ENCODE measurements at regions of chr9 and their contacts with region 1.

Region 1: DNA sequence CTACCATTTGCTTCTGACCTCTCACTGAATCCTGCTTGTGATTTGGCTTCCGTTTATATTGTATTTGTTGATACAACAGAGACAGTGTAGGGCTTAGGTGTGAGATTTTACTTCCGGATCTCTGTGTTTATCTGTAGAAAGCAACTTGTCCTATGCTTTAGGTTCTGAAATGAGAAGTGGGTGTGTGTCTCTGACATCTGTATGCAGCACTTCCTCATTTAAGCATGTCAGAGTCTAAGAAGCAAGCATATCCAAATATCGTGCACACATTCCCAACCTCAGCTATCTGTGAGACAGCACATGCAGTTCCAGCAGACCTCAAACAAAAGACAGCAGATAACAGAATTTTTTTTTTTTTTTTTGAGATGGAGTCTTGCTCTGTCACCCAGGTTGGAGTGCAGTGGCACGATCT is 16.3 kb downstream of the KLF9 start:
- DNase-seq: no peak

Region 2: GRCh38 chr9:69295872-69296552 is 1102.1 kb before region 1 on chr9:
- intact Hi-C with region 1: no loop called
- DNase-seq: peak in 1 of 10 donors; percentile 46

Region 3: DNA sequence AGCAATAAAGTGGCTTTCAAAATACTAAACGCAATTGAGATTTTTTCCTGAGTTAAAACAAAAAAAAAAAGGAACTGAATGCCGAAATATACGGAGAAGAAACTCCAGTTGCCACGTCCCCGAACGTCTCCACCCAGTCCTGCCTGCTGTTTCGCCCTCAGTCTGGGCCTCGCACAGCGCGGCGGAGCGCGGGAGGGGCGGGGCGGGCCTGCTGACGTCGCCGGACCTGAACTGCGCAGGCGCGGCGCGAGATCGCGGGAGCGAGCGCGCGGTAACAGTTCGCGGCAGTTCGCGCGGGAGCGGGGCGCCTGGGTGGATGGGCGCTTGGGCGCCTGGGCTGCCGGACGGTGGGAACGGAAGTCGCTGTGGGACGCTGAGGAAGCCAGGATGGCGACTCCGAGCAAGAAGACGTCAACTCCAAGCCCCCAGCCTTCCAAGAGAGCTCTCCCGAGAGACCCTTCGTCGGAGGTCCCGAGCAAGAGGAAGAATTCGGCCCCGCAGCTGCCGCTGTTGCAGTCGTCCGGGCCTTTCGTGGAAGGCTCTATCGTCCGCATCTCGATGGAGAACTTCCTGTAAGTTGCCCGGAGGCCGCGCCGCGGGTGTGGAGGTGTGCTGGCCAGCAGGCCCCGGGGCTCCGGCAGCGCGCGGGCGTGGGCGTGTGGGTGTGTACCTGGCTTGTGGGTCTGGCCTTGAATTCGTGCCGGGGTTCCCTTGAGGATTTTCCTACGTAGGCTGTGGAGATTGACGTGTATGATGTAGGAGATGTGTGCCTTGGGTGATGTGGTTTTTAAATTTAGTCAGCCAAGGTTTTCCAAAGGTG is 139.2 kb before region 1 on chr9 and contains the start of gene SMC5:
- intact Hi-C with region 1: loop called (anchors 10 kb)
- DNase-seq: peak; percentile 83 to 98 (median 88)

Region 4: GRCh38 chr9:70484210-70485130 is 86.3 kb after region 1 on chr9:
- intact Hi-C with region 1: no loop called
- DNase-seq: peak in 1 of 10 donors; percentile 37